ENCODE measurements at regions of chr16 and their contacts with region 1.

Region 1: GRCh38 chr16:23466066-23466885 is 13.3 kb upstream of the COG7 start:
- DNase-seq: peak; percentile 92
- ATAC-seq: peak; percentile 93
- H3K4me3 ChIP-seq: no peak overlapping the region
- H3K27ac ChIP-seq: peak overlapping the region; percentile 67
- H3K4me1 ChIP-seq: peaks cover 25% of the 10 kb centered on the region
- H3K27me3 ChIP-seq: no peaks in the 10 kb centered on the region
- CTCF ChIP-seq: no peak

Region 2: DNA sequence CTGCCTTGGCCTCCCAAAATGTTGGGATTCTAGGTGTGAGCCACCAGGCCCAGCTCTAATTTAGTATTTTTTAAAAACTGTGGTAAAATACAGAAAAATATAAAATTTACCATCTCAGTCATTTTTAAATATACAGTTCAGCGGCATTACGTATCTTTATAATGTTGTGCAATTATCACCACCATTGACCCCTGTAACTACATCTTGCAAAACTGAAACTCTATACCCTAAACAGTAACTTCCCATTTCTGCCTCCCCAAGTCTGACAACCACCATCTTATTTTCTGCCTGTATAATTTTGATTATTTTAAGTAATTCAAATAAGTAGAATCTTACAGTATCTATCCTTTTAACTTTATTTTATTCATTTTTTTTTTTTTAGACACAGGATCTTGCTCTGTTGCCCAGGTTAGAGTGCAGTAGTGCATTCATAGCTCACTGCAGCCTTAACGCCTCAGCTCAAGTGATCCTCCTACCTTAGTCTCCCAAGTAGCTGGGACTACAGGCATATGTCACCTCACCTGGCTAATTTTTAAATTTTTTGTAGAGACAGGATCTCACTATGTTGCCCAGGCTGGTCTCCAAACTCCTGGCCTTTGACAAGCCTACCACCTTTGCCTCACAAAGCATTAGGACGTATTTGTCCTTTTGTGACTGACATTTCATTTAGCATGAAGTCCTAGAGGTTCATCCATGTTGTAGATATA is 54.9 kb after region 1 on chr16:
- CTCF ChIA-PET with region 1: no interaction called
- POLR2A ChIA-PET with region 1: no interaction called
- intact Hi-C with region 1: loop called (anchors 5 kb)
- DNase-seq: no peak
- ATAC-seq: no peak
- H3K4me3 ChIP-seq: no peak overlapping the region
- H3K27ac ChIP-seq: no peak overlapping the region
- H3K4me1 ChIP-seq: peaks cover 8% of the 10 kb centered on the region
- H3K27me3 ChIP-seq: no peaks in the 10 kb centered on the region
- CTCF ChIP-seq: no peak

Region 3: DNA sequence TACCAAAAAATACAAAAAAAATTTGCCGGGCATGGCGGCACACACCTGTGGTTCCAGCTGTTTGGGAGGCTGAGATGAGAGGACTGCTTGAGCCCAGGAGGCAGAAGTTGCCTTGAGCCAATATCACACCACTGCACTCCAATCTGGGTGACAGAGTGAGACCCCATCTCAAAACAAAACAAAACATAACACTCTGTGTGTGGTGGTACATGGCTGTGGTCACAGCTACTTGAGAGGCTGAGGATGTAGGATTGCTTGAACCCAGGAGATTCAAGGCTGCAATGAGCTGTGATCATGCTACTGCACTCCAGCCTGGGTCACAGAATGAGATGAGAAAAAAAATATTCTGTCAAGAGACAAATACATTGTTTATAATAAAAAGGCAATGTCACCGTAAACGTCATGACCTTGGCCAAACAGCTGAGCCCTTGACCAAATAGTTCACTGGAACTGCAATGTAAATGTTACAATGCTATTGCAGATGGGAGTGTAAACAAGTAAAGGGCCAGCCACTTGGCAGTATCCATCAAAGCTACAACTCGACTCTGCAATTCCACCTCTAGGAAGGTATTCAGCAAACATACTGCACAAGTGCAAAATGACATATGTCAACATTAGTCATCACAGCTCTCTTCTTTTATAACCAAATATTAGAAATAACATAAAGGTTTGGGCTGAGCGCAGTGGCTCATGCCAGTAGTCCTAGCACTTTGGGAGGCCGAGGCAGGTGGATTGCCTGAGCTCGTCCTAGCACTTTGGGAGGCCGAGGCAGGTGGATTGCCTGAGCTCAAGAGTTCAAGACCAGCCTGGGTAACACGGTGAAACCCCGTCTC is 73.9 kb after region 1 on chr16:
- CTCF ChIA-PET with region 1: no interaction called
- POLR2A ChIA-PET with region 1: no interaction called
- intact Hi-C with region 1: loop called (anchors 10 kb)
- DNase-seq: peak; percentile 81
- ATAC-seq: peak; percentile 96
- H3K4me3 ChIP-seq: no peak overlapping the region
- H3K27ac ChIP-seq: peak overlapping the region; percentile 53
- H3K4me1 ChIP-seq: peaks cover 24% of the 10 kb centered on the region
- H3K27me3 ChIP-seq: no peaks in the 10 kb centered on the region
- CTCF ChIP-seq: no peak

Measured in PC-3 (cell line).